Uterus (tissue), 4 donors: ENCODE measurements at regions of chr12 and their contacts with region 1.

Region 1: GRCh38 chr12:21773263-21773741 is 1.2 kb downstream of the KCNJ8 start:
- DNase-seq: peak; percentile 49 to 64
- H3K4me3 ChIP-seq: peak overlapping the region; percentile 54 to 62
- H3K27ac ChIP-seq: peak overlapping the region; percentile 90 to 93
- H3K4me1 ChIP-seq: no peaks in the 10 kb centered on the region
- H3K27me3 ChIP-seq: no peaks in the 10 kb centered on the region
- CTCF ChIP-seq: peak in 2 of 4 experiments; percentile 32 to 33
- POLR2A ChIP-seq: no peak

Region 2: GRCh38 chr12:21337959-21338744 is 435.1 kb before region 1 on chr12:
- intact Hi-C with region 1: no loop called
- DNase-seq: no peak
- H3K4me3 ChIP-seq: no peak overlapping the region
- H3K27ac ChIP-seq: no peak overlapping the region
- H3K4me1 ChIP-seq: no peaks in the 10 kb centered on the region
- H3K27me3 ChIP-seq: no peaks in the 10 kb centered on the region
- CTCF ChIP-seq: no peak
- POLR2A ChIP-seq: no peak

Region 3: DNA sequence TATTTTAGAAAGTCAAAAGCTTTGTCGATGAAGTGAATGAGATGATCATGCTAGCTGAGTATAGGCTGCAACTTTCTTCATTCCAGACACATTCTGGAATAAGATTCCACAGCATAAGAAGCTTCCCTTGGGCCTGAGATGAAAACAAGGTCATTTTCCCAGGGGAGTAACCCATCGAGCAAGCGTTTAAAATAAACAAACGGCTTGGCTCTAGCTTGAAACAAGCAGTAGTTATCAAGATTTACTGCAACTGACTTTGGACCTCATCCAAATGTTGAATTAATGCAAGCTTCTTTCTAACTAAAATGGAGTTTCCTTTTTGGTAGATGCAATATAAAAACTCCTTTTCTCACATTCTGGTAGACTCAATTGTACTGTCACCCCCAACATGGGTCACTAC is 21.8 kb before region 1 on chr12:
- intact Hi-C with region 1: no loop called
- DNase-seq: peak in 1 of 2 donors; percentile 51
- H3K4me3 ChIP-seq: no peak overlapping the region
- H3K27ac ChIP-seq: peak overlapping the region; percentile 54 to 84
- H3K4me1 ChIP-seq: no peaks in the 10 kb centered on the region
- H3K27me3 ChIP-seq: no peaks in the 10 kb centered on the region
- CTCF ChIP-seq: no peak
- POLR2A ChIP-seq: no peak

Region 4: GRCh38 chr12:21788089-21788983 is 15.0 kb after region 1 on chr12:
- intact Hi-C with region 1: no loop called
- DNase-seq: peak in 1 of 2 donors; percentile 45
- H3K4me3 ChIP-seq: no peak overlapping the region
- H3K27ac ChIP-seq: peak overlapping the region in 1 of 2 donors; percentile 22
- H3K4me1 ChIP-seq: no peaks in the 10 kb centered on the region
- H3K27me3 ChIP-seq: no peaks in the 10 kb centered on the region
- CTCF ChIP-seq: no peak
- POLR2A ChIP-seq: no peak

Region 5: DNA sequence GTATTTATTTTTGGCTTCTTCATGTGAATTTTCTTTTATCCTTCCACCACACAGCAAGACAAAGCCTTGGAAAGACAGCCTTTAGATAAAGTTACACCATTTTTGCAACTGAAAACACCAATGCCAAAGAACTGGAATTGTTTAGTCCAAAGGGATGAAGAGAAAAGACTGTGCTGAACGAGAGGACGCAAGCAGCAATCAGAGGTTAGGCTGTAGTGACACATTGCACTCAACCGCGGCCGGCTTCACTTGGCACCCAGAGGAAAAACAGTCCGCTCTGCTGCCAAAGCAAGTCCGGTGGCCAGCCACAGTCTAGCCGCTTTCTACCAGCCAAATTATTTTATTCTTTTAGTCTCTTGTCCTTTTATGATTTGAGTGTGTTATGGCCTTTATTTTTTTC is 50.3 kb after region 1 on chr12:
- intact Hi-C with region 1: loop called (anchors 10 kb)
- DNase-seq: peak in 1 of 2 donors; percentile 18
- H3K4me3 ChIP-seq: no peak overlapping the region
- H3K27ac ChIP-seq: peak overlapping the region in 1 of 2 donors; percentile 41
- H3K4me1 ChIP-seq: peaks cover 4 to 15% of the 10 kb centered on the region in 2 donors
- H3K27me3 ChIP-seq: no peaks in the 10 kb centered on the region
- CTCF ChIP-seq: no peak
- POLR2A ChIP-seq: no peak